Dendritic cell treated with granulocyte-macrophage colony-stimulating factor and Interleukin-4, amounts not matched to agents 40 ng/mL and 50 ng/mL, for 4 days (primary cell): ENCODE measurements at regions of chr12 and their contacts with region 1.

Region 1: GRCh38 chr12:75390899-75391538 is at the start of gene GLIPR1L2:
- H3K4me3 Mint-ChIP-seq: peak within 1 kb of the TSS; percentile 83
- H3K27ac Mint-ChIP-seq: peak within 1 kb of the TSS; percentile 97
- H3K4me1 Mint-ChIP-seq: peaks cover 35% of the 10 kb centered on the region
- H3K27me3 Mint-ChIP-seq: no peaks in the 10 kb centered on the region

Region 2: GRCh38 chr12:74537707-74538385 is 853.2 kb before region 1 on chr12 and contains the start of gene ATXN7L3B:
- intact Hi-C with region 1: loop called (anchors 10 kb)
- H3K4me3 Mint-ChIP-seq: peak within 1 kb of the TSS; percentile 95
- H3K27ac Mint-ChIP-seq: peak within 1 kb of the TSS; percentile 99
- H3K4me1 Mint-ChIP-seq: peaks cover 38% of the 10 kb centered on the region
- H3K27me3 Mint-ChIP-seq: no peaks in the 10 kb centered on the region

Region 3: GRCh38 chr12:75349946-75350345 is 41.1 kb before region 1 on chr12:
- intact Hi-C with region 1: no loop called
- H3K4me3 Mint-ChIP-seq: no peak overlapping the region
- H3K27ac Mint-ChIP-seq: no peak overlapping the region
- H3K4me1 Mint-ChIP-seq: no peaks in the 10 kb centered on the region
- H3K27me3 Mint-ChIP-seq: no peaks in the 10 kb centered on the region

Region 4: GRCh38 chr12:75364919-75365318 is 26.1 kb before region 1 on chr12:
- intact Hi-C with region 1: no loop called
- H3K4me3 Mint-ChIP-seq: no peak overlapping the region
- H3K27ac Mint-ChIP-seq: no peak overlapping the region
- H3K4me1 Mint-ChIP-seq: peaks cover 16% of the 10 kb centered on the region
- H3K27me3 Mint-ChIP-seq: no peaks in the 10 kb centered on the region

Region 5: GRCh38 chr12:75374971-75375370 is 16.0 kb before region 1 on chr12:
- intact Hi-C with region 1: no loop called
- H3K4me3 Mint-ChIP-seq: no peak overlapping the region
- H3K27ac Mint-ChIP-seq: no peak overlapping the region
- H3K4me1 Mint-ChIP-seq: no peaks in the 10 kb centered on the region
- H3K27me3 Mint-ChIP-seq: no peaks in the 10 kb centered on the region

Region 6: GRCh38 chr12:75437564-75437963 is 46.5 kb after region 1 on chr12:
- intact Hi-C with region 1: loop called (anchors 5 kb)
- H3K4me3 Mint-ChIP-seq: no peak overlapping the region
- H3K27ac Mint-ChIP-seq: no peak overlapping the region
- H3K4me1 Mint-ChIP-seq: peaks cover 12% of the 10 kb centered on the region
- H3K27me3 Mint-ChIP-seq: no peaks in the 10 kb centered on the region

Region 7: GRCh38 chr12:75489613-75490210 is 98.7 kb after region 1 on chr12:
- intact Hi-C with region 1: loop called (anchors 2 kb)
- H3K4me3 Mint-ChIP-seq: no peak overlapping the region
- H3K27ac Mint-ChIP-seq: peak overlapping the region; percentile 16
- H3K4me1 Mint-ChIP-seq: peaks cover 44% of the 10 kb centered on the region
- H3K27me3 Mint-ChIP-seq: no peaks in the 10 kb centered on the region

Region 8: GRCh38 chr12:76031537-76032073 is 640.6 kb after region 1 on chr12 and contains the start of gene PHLDA1:
- intact Hi-C with region 1: loop called (anchors 2 kb)
- H3K4me3 Mint-ChIP-seq: peak within 1 kb of the TSS; percentile 99
- H3K27ac Mint-ChIP-seq: peak within 1 kb of the TSS; percentile 95
- H3K4me1 Mint-ChIP-seq: peaks cover 32% of the 10 kb centered on the region
- H3K27me3 Mint-ChIP-seq: peaks cover 20% of the 10 kb centered on the region